CD4-positive, alpha-beta T cell (primary cell): ENCODE measurements at regions of chr1 and their contacts with region 1.

Region 1: DNA sequence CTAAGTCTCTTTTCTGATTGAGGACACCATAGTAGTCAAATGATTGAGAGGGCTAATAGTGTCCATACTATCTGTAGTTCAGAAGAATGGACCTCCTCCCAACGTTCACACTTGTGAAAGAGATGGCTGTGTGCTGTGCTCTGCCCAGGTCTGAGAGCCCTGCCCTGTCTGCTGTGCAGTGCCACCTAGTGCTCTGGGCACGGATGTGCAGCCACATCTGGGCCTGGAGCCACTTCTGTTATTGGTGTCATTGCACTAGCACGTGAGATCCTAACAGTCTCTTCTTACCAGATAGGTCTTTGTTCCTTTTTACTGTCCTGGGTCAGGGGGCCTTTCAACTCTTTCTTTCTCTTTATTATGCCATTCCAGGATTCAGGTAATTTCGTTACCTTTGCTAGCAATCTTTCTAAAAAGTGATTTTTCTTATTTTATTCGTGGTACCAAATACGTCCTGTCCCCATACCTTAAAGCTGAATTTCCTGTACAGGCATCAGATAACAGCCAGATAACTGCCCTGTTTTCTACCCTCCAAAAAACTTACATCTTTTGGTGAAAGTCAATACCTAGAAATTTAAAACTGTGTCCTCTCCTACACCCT is 21.7 kb downstream of the INTS3 start:
- DNase-seq: peak; percentile 67 to 87 (median 75)
- ATAC-seq: peak; percentile 100
- H3K4me3 ChIP-seq: no peak overlapping the region
- H3K4me3 Mint-ChIP-seq: no peak overlapping the region
- H3K27ac ChIP-seq: no peak overlapping the region
- H3K27ac Mint-ChIP-seq: peak overlapping the region; percentile 3
- H3K4me1 ChIP-seq: no peaks in the 10 kb centered on the region
- H3K4me1 Mint-ChIP-seq: peaks cover 6% of the 10 kb centered on the region
- H3K27me3 ChIP-seq: no peaks in the 10 kb centered on the region
- H3K27me3 Mint-ChIP-seq: no peaks in the 10 kb centered on the region
- CTCF ChIP-seq: peak; percentile 95

Region 2: DNA sequence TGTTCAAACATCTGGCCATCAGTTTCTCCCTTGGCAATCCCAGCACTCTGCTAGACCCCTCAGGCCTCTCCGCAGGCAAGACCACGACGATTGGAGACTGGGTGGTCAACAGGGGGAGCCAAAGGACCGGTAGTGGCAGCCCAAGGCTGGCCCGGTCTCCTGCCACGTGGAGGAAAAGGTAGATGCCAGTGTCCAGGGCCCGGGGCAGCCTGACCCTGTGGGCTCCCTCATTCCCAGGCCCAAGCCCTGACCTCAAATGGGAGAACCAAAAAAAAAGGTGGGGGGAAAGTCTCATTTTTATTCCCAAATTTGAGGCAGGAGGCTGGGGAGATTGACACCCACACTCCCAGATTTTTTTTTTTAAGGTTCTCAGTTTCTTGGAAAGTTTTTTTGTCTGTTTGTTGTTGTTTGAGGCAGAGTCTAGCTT is 238.5 kb before region 1 on chr1:
- CTCF ChIA-PET with region 1: no interaction called
- POLR2A ChIA-PET with region 1: no interaction called
- intact Hi-C with region 1: loop called (anchors 1 kb)
- DNase-seq: peak; percentile 64 to 91 (median 75)
- ATAC-seq: peak; percentile 79
- H3K4me3 ChIP-seq: no peak overlapping the region
- H3K4me3 Mint-ChIP-seq: no peak overlapping the region
- H3K27ac ChIP-seq: no peak overlapping the region
- H3K27ac Mint-ChIP-seq: no peak overlapping the region
- H3K4me1 ChIP-seq: peaks cover 17% of the 10 kb centered on the region
- H3K4me1 Mint-ChIP-seq: peaks cover 8% of the 10 kb centered on the region
- H3K27me3 ChIP-seq: no peaks in the 10 kb centered on the region
- H3K27me3 Mint-ChIP-seq: no peaks in the 10 kb centered on the region
- CTCF ChIP-seq: peak; percentile 98

Region 3: DNA sequence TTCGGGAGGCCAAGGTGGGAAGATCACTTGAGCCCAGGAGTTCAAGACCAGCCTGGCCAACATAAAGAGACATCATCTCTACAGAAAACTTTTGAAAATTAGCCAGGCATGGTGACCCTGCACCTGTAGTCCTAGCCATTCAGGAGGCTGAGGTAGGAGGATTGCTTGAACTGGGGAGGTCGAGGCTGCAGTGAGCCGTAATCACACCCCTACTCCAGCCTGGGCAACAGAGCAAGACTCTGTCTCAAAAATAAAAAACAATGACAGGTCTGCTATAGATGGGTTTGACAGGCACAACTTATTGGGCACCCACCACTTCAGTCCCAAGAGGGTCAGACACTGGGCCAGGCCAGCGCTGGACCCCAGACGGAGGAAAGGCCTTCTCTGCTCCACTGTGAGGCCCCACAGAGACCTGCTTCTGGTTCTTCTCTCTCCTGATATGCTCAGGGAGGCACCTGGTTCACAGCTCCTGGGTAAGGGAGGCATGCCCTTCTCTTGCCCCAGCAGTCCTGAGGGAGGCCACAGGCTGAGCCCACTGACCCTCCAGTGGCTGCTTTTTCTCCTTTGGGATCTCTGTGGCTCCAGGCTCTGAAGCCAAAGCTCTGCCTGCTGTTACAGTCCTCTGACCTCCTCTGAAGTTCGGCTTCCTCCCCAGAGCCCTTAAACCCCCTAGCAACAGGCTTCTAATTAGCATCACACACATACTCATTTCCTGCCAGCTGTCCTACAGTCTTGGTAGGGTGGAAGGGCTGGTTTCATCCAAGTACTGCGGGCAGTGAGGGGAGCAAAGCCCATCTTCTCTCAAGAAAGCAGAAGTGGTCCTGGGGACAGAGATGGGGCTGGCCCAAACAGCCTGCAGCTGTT is 151.0 kb before region 1 on chr1:
- CTCF ChIA-PET with region 1: no interaction called
- POLR2A ChIA-PET with region 1: no interaction called
- intact Hi-C with region 1: no loop called
- DNase-seq: peak in 4 of 14 experiments; percentile 14 to 55 (median 39)
- ATAC-seq: peak; percentile 58
- H3K4me3 ChIP-seq: no peak overlapping the region
- H3K4me3 Mint-ChIP-seq: no peak overlapping the region
- H3K27ac ChIP-seq: no peak overlapping the region
- H3K27ac Mint-ChIP-seq: no peak overlapping the region
- H3K4me1 ChIP-seq: peaks cover 12% of the 10 kb centered on the region
- H3K4me1 Mint-ChIP-seq: peaks cover 5% of the 10 kb centered on the region
- H3K27me3 ChIP-seq: no peaks in the 10 kb centered on the region
- H3K27me3 Mint-ChIP-seq: no peaks in the 10 kb centered on the region
- CTCF ChIP-seq: no peak

Region 4: DNA sequence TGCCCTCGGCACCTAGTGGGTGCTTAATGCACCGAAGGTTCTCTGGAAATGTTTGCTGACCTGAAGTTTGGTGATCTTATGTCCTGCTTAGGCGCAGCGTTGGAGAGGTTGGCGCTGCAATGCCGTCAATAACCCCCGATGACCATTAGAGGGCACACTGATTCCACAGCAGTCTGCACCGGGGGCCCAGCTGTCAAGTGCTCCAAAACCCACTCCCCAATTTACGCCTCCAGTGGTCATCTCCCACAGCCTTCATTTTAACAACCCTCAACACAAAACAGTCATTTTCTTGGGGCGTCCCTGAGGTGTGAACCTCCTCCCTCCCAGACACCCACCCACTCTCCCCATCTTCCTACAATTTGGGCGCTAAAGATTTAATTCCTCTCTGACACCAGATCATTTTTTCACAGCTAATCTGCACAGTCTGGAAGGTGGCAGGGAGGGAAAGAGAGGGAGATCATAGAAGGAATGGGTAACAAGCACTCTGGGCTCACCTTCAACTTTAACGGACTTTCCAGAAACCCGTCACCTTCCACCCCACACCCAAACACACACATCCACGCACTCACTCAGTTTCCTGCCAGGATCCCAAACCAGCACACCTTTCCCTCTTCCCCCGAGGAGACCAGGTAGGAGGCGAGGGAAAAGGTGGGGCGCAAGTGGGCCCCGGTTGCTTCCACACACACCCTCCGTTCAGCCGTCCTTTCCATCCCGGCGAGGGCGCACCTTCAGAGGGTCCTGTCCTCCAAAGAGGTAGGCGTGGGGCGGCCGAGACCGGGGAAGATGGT is 71.6 kb before region 1 on chr1:
- CTCF ChIA-PET with region 1: interaction called, 12 read pairs
- POLR2A ChIA-PET with region 1: no interaction called
- intact Hi-C with region 1: loop called (anchors 1 kb)
- DNase-seq: peak in 13 of 14 experiments; percentile 22 to 74 (median 38)
- ATAC-seq: peak; percentile 51
- H3K4me3 ChIP-seq: peak overlapping the region; percentile 36
- H3K4me3 Mint-ChIP-seq: peak overlapping the region; percentile 71
- H3K27ac ChIP-seq: no peak overlapping the region
- H3K27ac Mint-ChIP-seq: no peak overlapping the region
- H3K4me1 ChIP-seq: peaks cover 25% of the 10 kb centered on the region
- H3K4me1 Mint-ChIP-seq: peaks cover 20% of the 10 kb centered on the region
- H3K27me3 ChIP-seq: peaks cover 30 to 35% of the 10 kb centered on the region in 2 experiments
- H3K27me3 Mint-ChIP-seq: peaks cover 57% of the 10 kb centered on the region
- CTCF ChIP-seq: peak; percentile 73